HCT116 (cell line): ENCODE measurements at regions of chr1 and their contacts with region 1.

Region 1: DNA sequence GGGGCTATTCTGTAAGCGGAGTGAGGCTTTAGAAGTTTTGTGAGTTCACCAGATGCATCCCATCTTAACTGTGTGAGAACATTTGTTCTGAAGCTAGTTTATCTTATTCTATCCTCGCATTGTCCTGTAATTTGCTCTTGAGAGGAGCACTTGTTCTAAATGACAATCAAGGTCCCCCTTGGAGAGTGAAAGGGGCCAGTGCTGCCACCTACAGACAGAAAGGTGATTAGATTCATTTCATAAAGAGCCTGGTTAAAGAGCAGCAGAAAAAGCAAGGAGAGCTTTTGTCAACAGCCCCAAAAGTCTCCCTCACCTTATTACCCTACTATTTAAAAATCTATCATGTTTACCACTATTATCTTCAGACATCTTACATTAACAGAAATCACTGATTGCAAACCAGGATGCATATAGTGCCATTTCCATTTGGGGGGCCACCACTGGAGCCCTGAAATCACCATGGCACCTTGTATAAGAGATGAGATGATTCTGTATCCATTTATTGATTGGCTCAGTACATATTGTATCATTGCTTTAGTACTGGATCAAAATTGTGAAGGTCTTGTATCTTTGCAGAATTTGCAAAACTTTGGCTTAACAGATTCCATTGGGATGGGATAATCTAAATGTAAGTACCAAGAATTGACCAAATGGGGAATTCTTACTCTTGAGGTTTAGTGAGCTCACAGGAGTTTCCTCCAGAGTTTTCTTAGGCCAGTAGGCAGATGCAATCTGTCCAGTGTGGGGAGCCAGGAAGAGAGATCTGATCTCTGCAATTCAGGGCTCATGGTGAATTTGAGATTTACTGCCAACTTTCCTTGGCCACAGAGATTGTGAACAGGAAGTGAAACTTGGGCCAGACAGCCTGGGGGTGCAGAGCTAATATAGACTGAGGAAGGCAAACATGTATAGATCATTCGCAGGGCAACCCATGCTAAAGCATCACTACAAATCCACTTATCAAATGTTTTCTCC is 64.3 kb upstream of the TRABD2B start:
- DNase-seq: peak; percentile 45
- ATAC-seq: peak; percentile 86
- H3K4me3 ChIP-seq: no peak overlapping the region
- H3K27ac ChIP-seq: no peak overlapping the region
- H3K4me1 ChIP-seq: no peaks in the 10 kb centered on the region
- H3K27me3 ChIP-seq: peaks cover 16% of the 10 kb centered on the region; the same call in 1 of the 2 replicates
- CTCF ChIP-seq: peak; percentile 68 to 75 (median 74); a peak in 5 of 6 replicates
- POLR2A ChIP-seq: no peak
- RAD21 ChIP-seq: peak; percentile 74

Region 2: GRCh38 chr1:47738560-47739182 is 322.8 kb before region 1 on chr1:
- CTCF ChIA-PET with region 1: interaction called, 8 read pairs
- POLR2A ChIA-PET with region 1: no interaction called
- RAD21 ChIA-PET with region 1: no interaction called
- intact Hi-C with region 1: loop called (anchors 1 kb)
- DNase-seq: no peak
- ATAC-seq: peak; percentile 95
- H3K4me3 ChIP-seq: no peak overlapping the region
- H3K27ac ChIP-seq: no peak overlapping the region
- H3K4me1 ChIP-seq: no peaks in the 10 kb centered on the region
- H3K27me3 ChIP-seq: peaks cover 6% of the 10 kb centered on the region; the same call in 1 of the 2 replicates
- CTCF ChIP-seq: peak; percentile 50 to 85 (median 74); a peak in 5 of 6 replicates
- POLR2A ChIP-seq: no peak
- RAD21 ChIP-seq: peak; percentile 73

Region 3: DNA sequence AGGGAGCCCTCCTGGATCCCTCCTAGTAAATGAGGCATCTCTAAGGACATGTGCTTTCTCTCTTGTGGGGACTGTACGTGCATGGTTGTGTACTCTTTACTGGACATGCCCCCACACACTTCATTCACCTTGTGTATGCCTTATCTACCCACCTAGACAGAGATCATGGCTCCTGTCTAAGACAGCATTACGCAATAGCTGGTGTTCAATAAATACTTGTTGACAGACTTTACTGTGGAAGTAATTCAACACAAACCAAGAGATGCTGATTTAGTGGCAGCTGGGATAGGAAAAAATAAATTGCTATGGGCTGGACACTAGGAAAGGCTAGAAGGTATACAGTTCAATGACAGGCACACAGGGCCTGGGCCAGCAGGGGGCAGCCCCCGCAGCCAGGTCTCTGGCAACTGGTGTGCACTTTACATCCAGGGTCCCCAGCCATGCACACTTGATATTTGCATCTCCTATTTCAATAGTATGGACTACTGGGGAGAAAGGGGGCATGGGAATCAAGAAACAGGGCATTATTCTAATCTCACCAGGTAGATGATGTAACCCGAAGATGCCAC is 88.5 kb before region 1 on chr1:
- CTCF ChIA-PET with region 1: interaction called, 3 read pairs
- POLR2A ChIA-PET with region 1: no interaction called
- RAD21 ChIA-PET with region 1: no interaction called
- intact Hi-C with region 1: loop called (anchors 1 kb)
- DNase-seq: no peak
- ATAC-seq: peak; percentile 88
- H3K4me3 ChIP-seq: no peak overlapping the region
- H3K27ac ChIP-seq: no peak overlapping the region
- H3K4me1 ChIP-seq: no peaks in the 10 kb centered on the region
- H3K27me3 ChIP-seq: peaks cover 2% of the 10 kb centered on the region; the same call in 1 of the 2 replicates
- CTCF ChIP-seq: peak; percentile 27 to 73 (median 66); a peak in 5 of 6 replicates
- POLR2A ChIP-seq: no peak
- RAD21 ChIP-seq: peak; percentile 22; the same call in 1 of the 2 replicates

Region 4: GRCh38 chr1:47997289-47998200 is 63.9 kb before region 1 on chr1 and contains the start of gene TRABD2B:
- CTCF ChIA-PET with region 1: interaction called, 17 read pairs
- POLR2A ChIA-PET with region 1: no interaction called
- RAD21 ChIA-PET with region 1: no interaction called
- intact Hi-C with region 1: loop called (anchors 1 kb)
- DNase-seq: peak; percentile 26
- ATAC-seq: peak; percentile 97
- H3K4me3 ChIP-seq: peak within 1 kb of the TSS; percentile 27 to 42
- H3K27ac ChIP-seq: no peak within 1 kb of the TSS
- H3K4me1 ChIP-seq: peaks cover 0 to 3% of the 10 kb centered on the region in 2 experiments; a peak in 2 of 4 replicates
- H3K27me3 ChIP-seq: peaks cover 18% of the 10 kb centered on the region; the same call in 1 of the 2 replicates
- CTCF ChIP-seq: peak; percentile 81 to 96 (median 92)
- POLR2A ChIP-seq: no peak
- RAD21 ChIP-seq: peak; percentile 78
- total RNA-seq, gene TRABD2B: 0.05 TPM